ENCODE measurements at regions of chr1 and their contacts with region 1.

Region 1: DNA sequence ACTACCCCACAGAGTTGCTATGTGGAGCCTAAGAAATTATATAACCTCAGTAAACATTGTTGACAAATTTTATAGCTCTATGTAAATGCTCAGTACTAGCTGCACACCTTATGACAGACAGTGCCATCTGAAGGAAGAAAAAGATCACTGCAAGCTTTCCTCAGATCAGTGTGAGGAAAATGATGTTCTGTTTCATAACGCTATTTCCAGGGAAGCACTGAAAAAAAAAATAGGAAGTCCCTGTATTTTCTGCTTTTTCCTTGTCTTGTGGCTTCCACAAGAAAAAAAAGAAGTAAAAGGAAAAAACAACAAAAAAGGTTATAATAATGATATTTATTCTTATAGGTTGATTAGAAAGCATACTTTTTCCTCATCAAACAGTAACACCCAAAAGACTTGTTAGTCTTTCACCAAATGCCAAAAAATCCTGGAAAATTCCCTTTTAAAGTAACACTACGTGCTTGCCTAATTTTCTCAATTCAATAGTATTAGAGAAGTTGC is 23.2 kb downstream of the LYST start:
- DNase-seq: no peak
- H3K4me3 ChIP-seq: no peak overlapping the region
- H3K27ac ChIP-seq: no peak overlapping the region
- H3K27me3 ChIP-seq: no peaks in the 10 kb centered on the region
- CTCF ChIP-seq: peak; percentile 75

Region 2: DNA sequence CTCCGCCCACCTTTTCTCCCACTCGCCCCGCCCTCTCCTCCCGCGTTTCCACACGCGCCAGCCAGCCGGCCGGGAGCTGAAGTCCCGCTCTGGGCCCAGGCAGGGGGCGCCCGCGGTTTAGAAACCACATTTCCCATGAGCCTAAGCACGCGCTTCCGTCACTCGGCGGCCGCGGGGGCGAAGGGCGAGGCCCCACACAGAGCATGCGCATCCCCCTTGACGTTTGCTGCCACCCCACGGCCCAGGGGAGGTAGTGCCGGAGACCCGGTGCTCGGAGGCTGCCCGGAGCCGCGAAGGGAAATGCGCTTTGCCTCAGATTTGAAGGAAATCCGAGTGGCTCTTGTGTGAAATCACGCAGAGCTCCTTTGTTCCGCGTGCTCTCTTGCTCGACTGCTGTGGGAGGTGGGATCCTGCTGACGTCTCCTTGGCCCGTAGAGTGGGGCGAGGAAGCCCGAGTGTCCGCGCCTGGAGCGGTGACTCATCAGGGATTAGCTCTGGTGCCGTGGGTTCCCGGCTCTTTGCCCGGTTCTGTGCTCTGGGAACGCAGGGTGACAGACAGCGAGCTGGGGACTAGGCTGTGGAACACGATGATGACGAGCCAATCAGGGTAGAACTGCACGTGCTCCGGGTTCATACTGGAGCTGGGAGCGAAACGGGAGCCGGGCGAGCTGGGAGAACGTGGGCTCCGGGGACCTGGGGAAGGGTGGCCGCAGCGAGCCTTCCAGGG is 338.9 kb before region 1 on chr1:
- CTCF ChIA-PET with region 1: interaction called, 16 read pairs
- POLR2A ChIA-PET with region 1: no interaction called
- DNase-seq: peak; percentile 98
- H3K4me3 ChIP-seq: peak overlapping the region; percentile 87
- H3K27ac ChIP-seq: peak overlapping the region; percentile 99
- H3K27me3 ChIP-seq: no peaks in the 10 kb centered on the region
- CTCF ChIP-seq: peak; percentile 77

Region 3: DNA sequence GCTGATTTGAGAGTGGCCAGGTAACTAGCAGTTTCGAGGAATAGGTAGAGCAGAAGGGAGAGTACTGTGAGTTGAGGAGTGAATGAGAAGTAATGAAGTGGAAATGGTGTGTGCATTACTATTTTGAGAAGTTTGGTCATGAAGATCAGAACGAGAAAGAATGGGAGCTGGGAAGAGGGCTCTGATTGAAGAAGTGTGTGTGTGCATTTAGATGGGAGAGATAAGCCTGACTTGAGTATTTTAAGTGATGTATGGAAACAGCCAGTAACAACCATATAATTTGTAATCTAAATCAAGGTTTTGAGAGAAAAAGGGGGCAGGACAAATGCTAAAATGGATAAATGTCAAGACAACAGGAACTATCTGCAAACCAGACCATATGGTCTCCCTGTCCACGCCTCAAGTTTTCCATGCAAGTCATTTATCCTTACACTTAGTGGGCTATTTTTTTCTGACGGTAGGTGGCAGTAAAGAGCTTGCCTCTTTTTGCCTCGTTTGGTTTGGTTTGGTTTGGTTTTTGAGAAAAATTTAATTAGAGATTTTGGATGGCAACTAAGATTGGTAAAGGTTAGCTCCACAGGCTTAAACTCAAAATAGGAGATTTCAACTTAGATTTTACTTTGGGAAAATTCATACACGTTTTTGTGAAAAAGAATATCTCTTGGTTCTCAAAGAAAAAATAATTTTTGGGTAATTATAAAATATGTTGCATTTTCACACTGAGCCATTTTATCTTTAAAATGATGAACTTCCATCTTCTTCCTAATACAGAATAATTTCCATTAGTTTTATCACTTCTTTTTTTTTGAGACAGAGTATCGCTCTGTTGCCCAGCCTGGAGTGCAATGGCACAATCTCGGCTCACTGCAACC is 329.8 kb before region 1 on chr1:
- CTCF ChIA-PET with region 1: interaction called, 31 read pairs
- POLR2A ChIA-PET with region 1: no interaction called
- DNase-seq: peak; percentile 49
- H3K4me3 ChIP-seq: no peak overlapping the region
- H3K27ac ChIP-seq: no peak overlapping the region
- H3K27me3 ChIP-seq: no peaks in the 10 kb centered on the region
- CTCF ChIP-seq: peak; percentile 93

Region 4: DNA sequence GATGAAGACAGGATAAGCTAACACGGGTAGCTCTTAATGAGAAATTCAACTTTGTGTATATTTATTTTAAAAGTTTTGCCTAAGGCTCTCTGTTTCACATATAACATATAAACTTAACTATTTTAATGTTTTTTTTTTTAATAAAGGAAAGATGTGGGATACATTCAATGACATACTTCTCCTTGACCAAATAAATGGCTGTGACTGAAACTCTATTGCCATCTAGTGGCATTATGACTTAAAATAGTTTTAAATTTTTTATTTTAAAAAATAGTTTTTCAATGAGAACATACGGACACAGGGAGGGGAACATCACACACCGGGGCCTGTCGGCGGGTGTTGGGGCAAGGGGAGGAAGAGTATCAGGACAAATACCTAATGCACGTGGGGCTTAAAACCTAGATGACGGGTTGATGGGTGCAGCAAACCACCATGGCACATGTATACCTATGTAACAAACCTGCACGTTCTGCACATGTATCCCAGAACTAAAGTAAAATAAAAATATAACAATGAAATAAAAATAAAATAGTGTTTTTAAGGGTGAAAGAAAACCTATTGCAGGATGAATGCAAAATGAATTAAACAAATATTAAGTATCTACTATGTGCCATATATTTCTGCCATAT is 60.2 kb before region 1 on chr1:
- CTCF ChIA-PET with region 1: interaction called, 34 read pairs
- POLR2A ChIA-PET with region 1: no interaction called
- DNase-seq: peak; percentile 15
- H3K4me3 ChIP-seq: no peak overlapping the region
- H3K27ac ChIP-seq: no peak overlapping the region
- H3K27me3 ChIP-seq: no peaks in the 10 kb centered on the region
- CTCF ChIP-seq: peak; percentile 60

Region 5: DNA sequence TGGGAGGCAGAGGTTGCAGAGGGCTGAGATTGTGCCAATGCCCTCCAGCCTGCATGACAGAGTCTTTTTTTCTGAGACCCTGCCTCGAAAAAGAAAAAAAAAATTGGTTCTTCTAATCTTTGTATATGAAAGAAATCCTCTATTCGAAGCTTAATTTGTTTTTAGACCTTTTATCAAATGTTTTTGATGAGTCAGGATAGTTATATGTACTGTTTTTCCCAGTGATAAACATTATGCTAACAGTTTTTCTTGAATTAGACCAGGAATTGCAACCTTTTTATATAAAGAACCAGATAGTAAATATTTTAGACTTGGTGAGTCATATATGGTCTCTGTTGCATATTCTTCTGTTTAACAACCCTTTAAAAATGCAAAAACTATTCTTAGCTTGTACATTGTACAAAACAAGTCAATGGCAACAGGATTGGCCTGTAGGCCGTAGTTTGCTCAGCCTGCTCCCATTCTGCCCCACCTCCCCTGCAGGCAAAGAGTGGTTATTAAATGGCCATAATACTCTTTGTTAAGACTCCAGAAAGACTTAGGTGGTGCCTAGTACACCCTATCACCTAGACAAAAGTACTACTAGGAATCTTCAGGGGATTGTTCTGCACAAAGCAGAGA is 22.0 kb before region 1 on chr1:
- CTCF ChIA-PET with region 1: interaction called, 21 read pairs
- POLR2A ChIA-PET with region 1: no interaction called
- DNase-seq: peak; percentile 66
- H3K4me3 ChIP-seq: no peak overlapping the region
- H3K27ac ChIP-seq: peak overlapping the region; percentile 71
- H3K27me3 ChIP-seq: no peaks in the 10 kb centered on the region
- CTCF ChIP-seq: 0 out of 2 replicates have a peak, but pooled peaks have one; percentile 21

Region 6: GRCh38 chr1:235831148-235831547 is 12.4 kb before region 1 on chr1:
- CTCF ChIA-PET with region 1: interaction called, 23 read pairs
- POLR2A ChIA-PET with region 1: no interaction called
- DNase-seq: no peak
- H3K4me3 ChIP-seq: no peak overlapping the region
- H3K27ac ChIP-seq: no peak overlapping the region
- H3K27me3 ChIP-seq: no peaks in the 10 kb centered on the region
- CTCF ChIP-seq: no peak

Region 7: GRCh38 chr1:235855811-235856429 is 12.4 kb after region 1 on chr1:
- CTCF ChIA-PET with region 1: interaction called, 13 read pairs
- POLR2A ChIA-PET with region 1: no interaction called
- DNase-seq: no peak
- H3K4me3 ChIP-seq: no peak overlapping the region
- H3K27ac ChIP-seq: no peak overlapping the region
- H3K27me3 ChIP-seq: no peaks in the 10 kb centered on the region
- CTCF ChIP-seq: no peak

Region 8: DNA sequence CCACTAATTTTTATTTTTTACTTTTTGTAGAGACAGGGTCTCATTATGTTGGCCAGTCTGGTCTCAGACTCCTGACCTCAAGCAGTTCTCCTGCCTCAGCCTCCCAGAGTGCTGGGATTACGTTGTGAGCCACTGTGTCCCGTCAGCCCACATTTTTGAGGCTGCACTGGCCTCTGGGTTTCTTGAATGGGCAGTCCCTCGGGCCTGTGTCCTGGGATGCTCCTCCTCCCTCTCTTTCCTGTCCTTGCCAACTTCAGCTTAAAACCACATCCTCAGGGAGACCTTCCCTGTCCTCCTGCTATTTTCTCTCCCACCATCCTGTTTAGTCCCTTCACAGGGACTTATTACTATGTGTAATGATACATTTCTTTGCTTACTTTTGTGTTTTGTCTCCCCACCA is 54.6 kb after region 1 on chr1:
- CTCF ChIA-PET with region 1: no interaction called
- POLR2A ChIA-PET with region 1: no interaction called
- DNase-seq: no peak
- H3K4me3 ChIP-seq: no peak overlapping the region
- H3K27ac ChIP-seq: no peak overlapping the region
- H3K27me3 ChIP-seq: no peaks in the 10 kb centered on the region
- CTCF ChIP-seq: no peak

Region 9: DNA sequence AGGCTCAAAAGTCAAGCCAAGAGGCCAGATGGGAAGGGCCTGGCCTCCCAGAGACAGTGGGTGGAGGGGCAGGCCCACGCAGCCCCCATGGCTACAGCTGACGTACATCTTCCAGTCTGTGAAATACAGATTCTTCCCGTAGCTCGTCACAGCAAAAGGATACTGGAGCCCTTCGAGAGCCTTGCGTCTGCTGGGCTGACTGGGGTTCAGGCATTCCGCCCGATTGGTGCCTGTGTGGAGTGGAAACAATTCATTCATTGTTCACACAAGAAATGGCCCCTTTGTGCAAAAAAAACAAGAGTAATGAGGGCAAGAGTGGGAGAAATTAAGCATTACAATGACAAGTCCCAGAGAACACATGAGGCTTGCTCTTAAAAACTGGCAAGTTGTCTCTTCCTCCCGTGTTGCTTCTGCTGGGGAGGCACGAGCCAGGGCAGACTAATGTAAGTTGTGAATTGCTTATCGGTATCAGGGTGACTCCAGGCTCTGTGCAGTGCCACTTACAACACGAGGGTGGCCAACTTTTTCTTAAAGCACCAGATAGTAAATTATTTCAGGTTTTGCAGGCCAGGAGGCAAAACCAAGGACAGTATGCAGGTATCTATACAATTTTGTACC is 136.3 kb after region 1 on chr1:
- CTCF ChIA-PET with region 1: no interaction called
- POLR2A ChIA-PET with region 1: no interaction called
- DNase-seq: no peak
- H3K4me3 ChIP-seq: no peak overlapping the region
- H3K27ac ChIP-seq: no peak overlapping the region
- H3K27me3 ChIP-seq: no peaks in the 10 kb centered on the region
- CTCF ChIP-seq: no peak

Region 10: DNA sequence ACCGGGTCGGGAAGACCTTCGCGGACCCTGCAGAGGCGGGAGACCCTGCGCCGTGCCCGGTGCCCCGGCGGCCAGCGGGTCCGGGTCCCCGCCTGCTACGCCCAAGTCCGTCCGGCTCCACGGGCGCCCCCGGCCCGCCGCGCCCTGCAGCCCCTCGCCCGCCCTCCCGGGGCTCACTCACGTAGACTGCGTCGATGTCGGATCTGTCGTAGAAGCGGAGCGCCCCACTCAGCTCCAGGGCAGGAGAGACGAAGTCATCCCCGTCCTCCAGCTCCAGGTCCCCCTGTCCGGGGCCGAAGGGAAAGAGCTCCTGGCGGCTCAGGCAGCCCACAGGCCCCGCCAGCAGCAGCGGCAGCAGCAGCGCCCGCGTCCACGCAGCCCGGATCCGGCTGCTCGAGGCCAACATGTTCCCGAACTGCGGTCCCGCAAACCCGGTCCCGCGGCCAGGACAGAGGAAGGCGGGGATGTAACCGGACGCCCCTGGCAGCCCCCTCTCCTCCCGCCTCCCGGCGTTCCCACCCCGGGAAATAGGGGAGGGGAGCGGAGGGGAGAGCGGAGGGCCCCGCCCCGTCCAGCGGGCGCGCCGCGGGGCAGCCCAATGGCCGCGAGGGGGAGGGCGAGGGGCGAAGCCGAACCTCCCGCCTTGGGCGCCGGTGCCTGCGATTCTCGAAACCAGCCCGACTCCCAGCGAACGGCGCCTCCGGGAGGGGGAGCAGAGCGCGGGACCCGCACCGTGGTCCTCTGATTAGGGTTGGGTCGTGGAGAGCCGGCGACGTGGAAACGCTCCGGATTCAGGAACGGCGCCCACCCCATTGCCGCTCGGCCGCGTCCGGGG is 221.4 kb after region 1 on chr1 and contains the start of gene NID1:
- CTCF ChIA-PET with region 1: no interaction called
- POLR2A ChIA-PET with region 1: no interaction called
- DNase-seq: no peak
- H3K4me3 ChIP-seq: peak within 1 kb of the TSS; percentile 67
- H3K27ac ChIP-seq: peak within 1 kb of the TSS; percentile 69
- H3K27me3 ChIP-seq: no peaks in the 10 kb centered on the region
- CTCF ChIP-seq: peak; percentile 24
- polyA plus RNA-seq, gene NID1: 129 and 137 TPM in 2 replicates

Measured in AG04450 (cell line).